Right lobe of liver (tissue), 6 donors: ENCODE measurements at regions of chr3 and their contacts with region 1.

Region 1: GRCh38 chr3:148861277-148861869 is 3.7 kb upstream of the CPA3 start:
- DNase-seq: no peak
- ATAC-seq: peak; percentile 67 to 85 (median 72)
- H3K4me3 ChIP-seq: no peak overlapping the region
- H3K27ac ChIP-seq: no peak overlapping the region
- H3K4me1 ChIP-seq: no peaks in the 10 kb centered on the region
- H3K27me3 ChIP-seq: no peaks in the 10 kb centered on the region
- CTCF ChIP-seq: peak; percentile 68 to 85 (median 76)
- POLR2A ChIP-seq: no peak

Region 2: DNA sequence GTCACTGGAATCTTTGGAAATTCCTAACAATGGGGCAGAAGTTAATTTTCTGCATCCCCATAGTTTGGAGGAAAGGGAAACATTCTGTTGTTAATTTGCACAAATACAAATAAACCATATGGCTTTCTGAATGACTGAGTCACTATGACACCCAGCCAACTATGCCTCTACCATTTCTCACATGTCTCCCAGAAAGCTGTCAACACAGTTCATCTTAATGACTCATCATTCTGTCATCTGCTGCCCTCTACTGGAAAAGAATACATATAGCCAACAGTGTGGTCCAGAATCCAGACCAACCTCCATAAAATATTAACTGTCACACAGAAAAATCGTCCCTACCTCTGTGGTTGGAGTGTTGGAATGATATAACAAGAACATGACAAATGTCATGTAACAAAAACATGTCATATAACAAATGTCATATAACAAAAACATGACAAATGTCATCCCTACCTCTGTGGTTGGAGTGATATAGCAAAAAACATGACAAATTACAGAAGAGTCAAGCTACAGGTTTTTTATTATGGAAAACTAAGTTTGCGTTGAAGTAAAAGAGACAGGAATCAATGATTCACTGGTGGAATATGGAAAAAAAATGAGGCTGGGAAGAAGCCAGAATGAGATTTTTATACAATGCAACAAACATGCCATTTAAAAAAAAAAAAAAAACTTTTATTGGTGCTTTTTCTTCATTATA is 82.3 kb after region 1 on chr3:
- intact Hi-C with region 1: loop called (anchors 5 kb)
- DNase-seq: no peak
- ATAC-seq: peak; percentile 94 to 98 (median 96)
- H3K4me3 ChIP-seq: no peak overlapping the region
- H3K27ac ChIP-seq: no peak overlapping the region
- H3K4me1 ChIP-seq: no peaks in the 10 kb centered on the region
- H3K27me3 ChIP-seq: no peaks in the 10 kb centered on the region
- CTCF ChIP-seq: peak; percentile 75 to 88 (median 78)
- POLR2A ChIP-seq: no peak

Region 3: GRCh38 chr3:149086232-149086988 is 225.0 kb after region 1 on chr3 and contains the start of gene HLTF:
- intact Hi-C with region 1: no loop called
- DNase-seq: peak; percentile 92 to 96 (median 93)
- ATAC-seq: peak; percentile 99 to 100 (median 99)
- H3K4me3 ChIP-seq: peak within 1 kb of the TSS; percentile 64 to 73 (median 68)
- H3K27ac ChIP-seq: peak within 1 kb of the TSS; percentile 15 to 40 (median 32)
- H3K4me1 ChIP-seq: peaks cover 0 to 8% (median 0%) of the 10 kb centered on the region in 4 donors
- H3K27me3 ChIP-seq: no peaks in the 10 kb centered on the region
- CTCF ChIP-seq: no peak
- POLR2A ChIP-seq: peak; percentile 28
- total RNA-seq, gene HLTF: 10.5 to 14.6 (median 12.3) TPM